T-cell (primary cell): ENCODE measurements at regions of chr10 and their contacts with region 1.

Region 1: GRCh38 chr10:12241810-12242529 is 46.0 kb downstream of the CDC123 start:
- DNase-seq: no peak
- ATAC-seq: no peak
- H3K4me3 ChIP-seq: no peak overlapping the region
- H3K4me3 Mint-ChIP-seq: no peak overlapping the region
- H3K27ac ChIP-seq: no peak overlapping the region
- H3K27ac Mint-ChIP-seq: peak overlapping the region; percentile 78 to 83
- H3K4me1 ChIP-seq: no peaks in the 10 kb centered on the region
- H3K4me1 Mint-ChIP-seq: peaks cover 14 to 27% (median 17%) of the 10 kb centered on the region in 3 donors
- H3K27me3 ChIP-seq: no peaks in the 10 kb centered on the region
- H3K27me3 Mint-ChIP-seq: no peaks in the 10 kb centered on the region

Region 2: DNA sequence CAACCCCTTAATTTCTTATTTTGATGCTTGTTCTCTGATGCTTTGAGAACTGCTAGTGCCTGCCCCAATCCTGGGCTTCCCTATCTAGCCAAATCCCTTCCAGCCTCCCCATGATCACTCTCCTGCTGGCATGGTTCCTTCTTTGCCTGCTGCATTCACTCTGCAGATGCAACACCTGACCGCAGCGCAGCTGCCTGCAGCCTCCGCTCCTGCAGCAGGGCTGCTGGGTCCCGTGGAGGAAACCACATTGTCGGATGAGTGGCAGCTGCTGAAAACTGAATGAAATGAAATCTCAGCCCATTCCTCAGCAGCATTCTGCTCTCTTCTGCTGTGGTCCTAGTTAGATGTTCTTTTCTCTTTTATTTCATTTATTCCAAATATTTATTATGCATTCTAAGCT is 439.3 kb after region 1 on chr10:
- CTCF ChIA-PET with region 1: no interaction called
- POLR2A ChIA-PET with region 1: interaction called in 1 of 2 experiments, 10 read pairs
- DNase-seq: peak in 13 of 35 experiments; percentile 2 to 26 (median 8)
- ATAC-seq: peak in 3 of 4 experiments; percentile 58 to 70 (median 63)
- H3K4me3 ChIP-seq: no peak overlapping the region
- H3K4me3 Mint-ChIP-seq: peak overlapping the region in 2 of 3 donors; percentile 22 to 45
- H3K27ac ChIP-seq: no peak overlapping the region
- H3K27ac Mint-ChIP-seq: no peak overlapping the region
- H3K4me1 ChIP-seq: peaks cover 0 to 6% of the 10 kb centered on the region in 2 experiments
- H3K4me1 Mint-ChIP-seq: peaks cover 7 to 14% (median 8%) of the 10 kb centered on the region in 3 donors
- H3K27me3 ChIP-seq: no peaks in the 10 kb centered on the region
- H3K27me3 Mint-ChIP-seq: no peaks in the 10 kb centered on the region